Activated naive CD4-positive, alpha-beta T cell treated with anti-CD3 and anti-CD28 coated beads for 36 hours (primary cell): ENCODE measurements at regions of chr16 and their contacts with region 1.

Region 1: GRCh38 chr16:15704545-15704987 is 54.5 kb downstream of the NDE1 start:
- DNase-seq: peak; percentile 88
- H3K4me3 Mint-ChIP-seq: no peak overlapping the region
- H3K27ac Mint-ChIP-seq: peak overlapping the region; percentile 46
- H3K4me1 Mint-ChIP-seq: peaks cover 13% of the 10 kb centered on the region
- H3K27me3 Mint-ChIP-seq: no peaks in the 10 kb centered on the region

Region 2: DNA sequence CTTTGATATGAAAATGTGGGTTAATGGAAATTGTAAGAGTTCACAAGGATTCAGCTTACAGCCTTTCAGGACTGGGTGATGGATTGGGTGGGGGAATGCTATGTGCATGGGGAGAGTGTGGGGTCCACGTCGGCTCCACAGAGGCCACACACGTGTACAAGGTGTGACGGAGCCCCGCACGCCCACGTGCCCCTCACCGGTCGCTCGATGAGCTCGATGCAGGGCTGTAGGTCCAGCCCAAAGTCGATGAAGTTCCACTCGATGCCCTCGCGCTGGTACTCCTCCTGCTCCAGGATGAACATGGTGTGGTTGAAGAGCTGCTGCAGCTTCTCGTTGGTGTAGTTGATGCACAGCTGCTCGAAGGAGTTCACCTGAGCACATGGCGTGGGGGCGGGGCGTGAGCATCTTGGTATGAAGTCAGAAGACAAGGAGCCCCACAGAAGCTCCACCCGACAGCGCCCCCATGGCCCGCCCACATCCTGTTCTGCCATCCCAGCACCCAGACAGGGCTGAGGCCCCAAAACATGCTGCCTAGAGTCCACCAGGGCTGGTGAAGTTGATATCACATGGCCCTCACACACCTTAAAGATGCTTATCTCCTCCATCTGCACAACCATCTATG is 53.2 kb after region 1 on chr16:
- CTCF ChIA-PET with region 1: interaction called, 5 read pairs
- intact Hi-C with region 1: loop called (anchors 10 kb)
- DNase-seq: peak; percentile 24
- H3K4me3 Mint-ChIP-seq: no peak overlapping the region
- H3K27ac Mint-ChIP-seq: no peak overlapping the region
- H3K4me1 Mint-ChIP-seq: no peaks in the 10 kb centered on the region
- H3K27me3 Mint-ChIP-seq: peaks cover 3% of the 10 kb centered on the region